ENCODE measurements at regions of chr10 and their contacts with region 1.

Region 1: GRCh38 chr10:125333209-125333591 is 172.8 kb upstream of the CTBP2 start:
- DNase-seq: no peak
- H3K4me3 Mint-ChIP-seq: no peak overlapping the region
- H3K27ac Mint-ChIP-seq: no peak overlapping the region
- H3K4me1 Mint-ChIP-seq: no peaks in the 10 kb centered on the region
- H3K27me3 Mint-ChIP-seq: peaks cover 1% of the 10 kb centered on the region
- CTCF ChIP-seq: no peak

Region 2: GRCh38 chr10:125343118-125343925 is 10.1 kb after region 1 on chr10:
- CTCF ChIA-PET with region 1: interaction called, 12 read pairs
- POLR2A ChIA-PET with region 1: no interaction called
- intact Hi-C with region 1: no loop called
- DNase-seq: peak; percentile 45
- H3K4me3 Mint-ChIP-seq: no peak overlapping the region
- H3K27ac Mint-ChIP-seq: no peak overlapping the region
- H3K4me1 Mint-ChIP-seq: peaks cover 8% of the 10 kb centered on the region
- H3K27me3 Mint-ChIP-seq: no peaks in the 10 kb centered on the region
- CTCF ChIP-seq: peak; percentile 44

Measured in MCF 10A (cell line).